H1 (cell line): ENCODE measurements at regions of chr4 and their contacts with region 1.

Region 1: GRCh38 chr4:112655270-112655669 is 18.3 kb downstream of the LARP7 start:
- DNase-seq: no peak
- H3K4me3 ChIP-seq: peak overlapping the region in 1 of 4 experiments; percentile 38; a peak in 1 of 8 replicates
- H3K27ac ChIP-seq: peak overlapping the region; percentile 39; the same call in 1 of the 2 replicates
- H3K4me1 ChIP-seq: peaks cover 0 to 27% (median 8%) of the 10 kb centered on the region in 4 experiments; a peak in 3 of 7 replicates
- H3K27me3 ChIP-seq: no peaks in the 10 kb centered on the region
- CTCF ChIP-seq: no peak
- EP300 ChIP-seq: no peak
- POLR2A ChIP-seq: no peak
- RAD21 ChIP-seq: no peak

Region 2: DNA sequence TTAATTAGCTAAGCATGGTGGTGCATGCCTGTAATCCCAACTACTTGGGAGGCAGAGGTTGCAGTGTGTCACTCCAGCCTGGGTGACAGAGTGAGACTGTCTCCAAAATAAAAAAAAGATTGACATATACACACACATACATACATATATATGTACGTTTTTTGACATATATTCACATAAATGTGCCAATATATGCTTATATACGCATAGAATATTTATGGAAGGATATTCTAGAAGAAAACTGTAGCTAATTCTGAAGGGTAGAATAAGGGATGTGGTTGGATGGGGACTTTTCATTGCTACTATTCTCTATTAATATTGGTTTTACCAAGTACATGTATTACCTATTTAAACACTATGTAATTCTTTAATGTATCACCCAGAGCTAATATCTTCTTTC is 38.3 kb before region 1 on chr4:
- CTCF ChIA-PET with region 1: no interaction called
- POLR2A ChIA-PET with region 1: no interaction called
- DNase-seq: no peak
- H3K4me3 ChIP-seq: no peak overlapping the region
- H3K27ac ChIP-seq: no peak overlapping the region
- H3K4me1 ChIP-seq: no peaks in the 10 kb centered on the region
- H3K27me3 ChIP-seq: no peaks in the 10 kb centered on the region
- CTCF ChIP-seq: no peak
- EP300 ChIP-seq: no peak
- POLR2A ChIP-seq: no peak
- RAD21 ChIP-seq: no peak

Region 3: GRCh38 chr4:112642526-112642925 is 12.7 kb before region 1 on chr4:
- CTCF ChIA-PET with region 1: interaction called, 6 read pairs
- POLR2A ChIA-PET with region 1: interaction called, 159 read pairs
- DNase-seq: no peak
- H3K4me3 ChIP-seq: no peak overlapping the region
- H3K27ac ChIP-seq: no peak overlapping the region
- H3K4me1 ChIP-seq: peaks cover 0 to 9% (median 1%) of the 10 kb centered on the region in 4 experiments; a peak in 1 of 7 replicates
- H3K27me3 ChIP-seq: no peaks in the 10 kb centered on the region
- CTCF ChIP-seq: no peak
- EP300 ChIP-seq: no peak
- POLR2A ChIP-seq: peak in 1 of 2 experiments; percentile 10; a peak in 1 of 3 replicates
- RAD21 ChIP-seq: no peak

Region 4: GRCh38 chr4:112704991-112705845 is 49.9 kb after region 1 on chr4:
- CTCF ChIA-PET with region 1: interaction called, 8 read pairs
- POLR2A ChIA-PET with region 1: interaction called, 73 read pairs
- DNase-seq: peak; percentile 19 to 58
- H3K4me3 ChIP-seq: peak overlapping the region; percentile 53 to 73 (median 64)
- H3K27ac ChIP-seq: peak overlapping the region; percentile 84
- H3K4me1 ChIP-seq: peaks cover 0 to 21% (median 3%) of the 10 kb centered on the region in 4 experiments; a peak in 6 of 7 replicates
- H3K27me3 ChIP-seq: no peaks in the 10 kb centered on the region
- CTCF ChIP-seq: no peak
- EP300 ChIP-seq: no peak
- POLR2A ChIP-seq: peak; percentile 60 to 76
- RAD21 ChIP-seq: no peak

Region 5: GRCh38 chr4:112747036-112747435 is 91.8 kb after region 1 on chr4:
- CTCF ChIA-PET with region 1: interaction called, 4 read pairs
- POLR2A ChIA-PET with region 1: interaction called, 306 read pairs
- DNase-seq: peak in 1 of 2 experiments; percentile 25
- H3K4me3 ChIP-seq: peak overlapping the region in 1 of 4 experiments; percentile 46; a peak in 1 of 8 replicates
- H3K27ac ChIP-seq: peak overlapping the region; percentile 42; the same call in 1 of the 2 replicates
- H3K4me1 ChIP-seq: peaks cover 4 to 21% (median 12%) of the 10 kb centered on the region in 4 experiments; a peak in 6 of 7 replicates
- H3K27me3 ChIP-seq: no peaks in the 10 kb centered on the region
- CTCF ChIP-seq: no peak
- EP300 ChIP-seq: no peak
- POLR2A ChIP-seq: no peak
- RAD21 ChIP-seq: no peak

Region 6: GRCh38 chr4:112759313-112759712 is 104.0 kb after region 1 on chr4:
- CTCF ChIA-PET with region 1: interaction called, 73 read pairs
- POLR2A ChIA-PET with region 1: interaction called, 306 read pairs
- DNase-seq: peak in 1 of 2 experiments; percentile 65
- H3K4me3 ChIP-seq: peak overlapping the region in 1 of 4 experiments; percentile 35; a peak in 1 of 8 replicates
- H3K27ac ChIP-seq: peak overlapping the region; percentile 78; the same call in 1 of the 2 replicates
- H3K4me1 ChIP-seq: peaks cover 0 to 7% (median 5%) of the 10 kb centered on the region in 4 experiments; a peak in 4 of 7 replicates
- H3K27me3 ChIP-seq: no peaks in the 10 kb centered on the region
- CTCF ChIP-seq: no peak
- EP300 ChIP-seq: peak in 1 of 2 experiments; percentile 79; a peak in 1 of 3 replicates
- POLR2A ChIP-seq: no peak; a peak in 1 of 3 replicates
- RAD21 ChIP-seq: no peak; a peak in 1 of 4 replicates